ENCODE measurements at regions of chr5 and their contacts with region 1.

Region 1: DNA sequence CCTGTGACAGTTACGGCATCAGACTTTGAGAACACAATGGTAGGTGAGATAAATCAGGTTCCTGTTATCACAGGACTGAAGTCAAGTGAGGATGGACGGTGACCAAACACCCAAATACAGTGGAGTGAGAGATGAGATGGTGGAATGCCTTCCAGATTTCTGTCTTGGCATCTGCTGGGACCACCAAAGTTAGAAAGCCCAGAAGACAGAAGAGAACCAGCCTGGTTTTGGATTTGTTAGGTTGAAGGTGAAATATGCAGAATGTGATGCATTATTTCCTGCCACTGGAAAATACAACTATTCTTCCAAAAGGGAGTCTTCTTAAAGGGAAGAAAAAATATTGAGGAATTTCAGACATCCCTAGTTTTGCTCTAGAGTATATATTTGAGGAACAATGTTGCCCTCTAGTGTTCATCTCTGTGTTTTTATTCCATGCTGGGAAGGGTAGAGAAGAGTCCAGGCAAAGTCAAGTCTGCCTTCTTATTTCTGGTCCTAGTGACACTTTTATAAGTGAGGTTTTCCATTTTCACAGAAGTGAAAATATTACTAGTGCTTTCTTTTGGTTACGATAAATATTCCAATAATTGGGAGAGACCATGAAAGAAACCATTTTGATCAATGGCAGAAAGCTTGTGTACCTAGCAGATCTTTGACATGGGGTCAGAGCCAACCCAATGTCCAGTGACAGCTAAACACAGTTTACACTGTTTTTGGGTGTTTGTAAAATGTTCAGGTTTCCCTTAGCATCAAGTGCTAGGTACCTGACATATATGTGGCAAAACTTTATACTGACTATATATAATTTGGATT is 142.3 kb upstream of the ANKH start:
- DNase-seq: no peak
- H3K4me3 ChIP-seq: no peak overlapping the region
- H3K27ac ChIP-seq: no peak overlapping the region
- H3K4me1 ChIP-seq: peaks cover 4 to 22% (median 15%) of the 10 kb centered on the region in 4 donors
- H3K27me3 ChIP-seq: no peaks in the 10 kb centered on the region
- CTCF ChIP-seq: peak; percentile 64 to 76 (median 71)
- EP300 ChIP-seq: no peak
- POLR2A ChIP-seq: no peak

Region 2: DNA sequence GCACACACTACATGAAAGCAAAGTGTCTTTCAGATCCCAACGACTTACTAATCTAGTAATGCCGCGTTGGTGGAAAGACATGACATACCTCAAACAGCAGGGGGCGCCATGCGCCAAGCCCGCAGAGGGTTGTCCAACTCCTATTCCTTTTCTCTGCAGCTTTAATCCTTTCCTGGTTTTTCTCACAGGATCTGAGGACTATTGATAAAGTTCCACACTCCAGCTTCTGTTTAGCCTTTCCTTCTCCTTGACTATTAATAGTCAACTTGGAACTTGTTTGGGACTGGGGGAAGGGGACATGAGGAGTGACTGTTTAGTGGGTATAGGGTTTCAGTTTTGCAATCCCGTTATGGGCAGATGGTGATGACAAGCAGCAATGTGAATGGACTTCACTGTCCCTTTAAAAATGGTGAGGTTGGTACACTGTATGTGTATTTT is 286.4 kb before region 1 on chr5:
- in situ Hi-C with region 1: loop called in 2 of 4 experiments (anchors 10 kb)
- intact Hi-C with region 1: loop called (anchors 5 kb)
- DNase-seq: peak; percentile 79
- H3K4me3 ChIP-seq: no peak overlapping the region
- H3K27ac ChIP-seq: no peak overlapping the region
- H3K4me1 ChIP-seq: peaks cover 0 to 18% (median 10%) of the 10 kb centered on the region in 4 donors
- H3K27me3 ChIP-seq: no peaks in the 10 kb centered on the region
- CTCF ChIP-seq: peak; percentile 93 to 95 (median 93)
- EP300 ChIP-seq: no peak
- POLR2A ChIP-seq: no peak

Region 3: GRCh38 chr5:15026011-15026893 is 12.4 kb after region 1 on chr5:
- in situ Hi-C with region 1: no loop called
- intact Hi-C with region 1: no loop called
- DNase-seq: no peak
- H3K4me3 ChIP-seq: no peak overlapping the region
- H3K27ac ChIP-seq: no peak overlapping the region
- H3K4me1 ChIP-seq: no peaks in the 10 kb centered on the region
- H3K27me3 ChIP-seq: no peaks in the 10 kb centered on the region
- CTCF ChIP-seq: no peak
- EP300 ChIP-seq: no peak
- POLR2A ChIP-seq: no peak

Measured in transverse colon (tissue), 4 donors.